Psoas muscle (tissue), 8 donors: ENCODE measurements at regions of chr20 and their contacts with region 1.

Region 1: GRCh38 chr20:45011108-45011526 is 44.8 kb downstream of the STK4 start:
- DNase-seq: no peak
- ATAC-seq: peak in 3 of 4 donors; percentile 64 to 71 (median 68)
- H3K4me3 ChIP-seq: no peak overlapping the region
- H3K27ac ChIP-seq: no peak overlapping the region
- H3K4me1 ChIP-seq: no peaks in the 10 kb centered on the region
- H3K27me3 ChIP-seq: no peaks in the 10 kb centered on the region
- CTCF ChIP-seq: peak; percentile 70

Region 2: DNA sequence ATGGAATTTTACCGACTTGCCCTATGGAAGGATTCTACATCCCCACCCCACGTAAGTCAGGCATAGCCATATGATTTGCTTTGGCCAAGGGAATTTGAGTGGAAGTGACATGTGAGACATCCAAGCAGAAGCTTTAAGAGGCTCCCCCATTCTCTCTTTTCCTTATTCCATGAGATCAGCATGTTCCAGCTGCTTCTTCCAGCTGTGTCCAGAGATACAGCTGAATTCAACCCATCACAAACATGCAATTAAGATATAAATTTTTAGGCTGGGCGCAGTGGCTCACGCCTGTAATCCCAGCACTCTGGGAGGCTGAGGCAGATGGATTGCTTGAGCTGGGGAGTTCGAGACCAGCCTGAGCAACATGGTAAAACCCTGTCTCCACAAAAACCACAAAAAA is 141.6 kb before region 1 on chr20:
- intact Hi-C with region 1: no loop called
- DNase-seq: no peak
- ATAC-seq: no peak
- H3K4me3 ChIP-seq: no peak overlapping the region
- H3K27ac ChIP-seq: no peak overlapping the region
- H3K4me1 ChIP-seq: peaks cover 7% of the 10 kb centered on the region
- H3K27me3 ChIP-seq: no peaks in the 10 kb centered on the region
- CTCF ChIP-seq: no peak

Region 3: DNA sequence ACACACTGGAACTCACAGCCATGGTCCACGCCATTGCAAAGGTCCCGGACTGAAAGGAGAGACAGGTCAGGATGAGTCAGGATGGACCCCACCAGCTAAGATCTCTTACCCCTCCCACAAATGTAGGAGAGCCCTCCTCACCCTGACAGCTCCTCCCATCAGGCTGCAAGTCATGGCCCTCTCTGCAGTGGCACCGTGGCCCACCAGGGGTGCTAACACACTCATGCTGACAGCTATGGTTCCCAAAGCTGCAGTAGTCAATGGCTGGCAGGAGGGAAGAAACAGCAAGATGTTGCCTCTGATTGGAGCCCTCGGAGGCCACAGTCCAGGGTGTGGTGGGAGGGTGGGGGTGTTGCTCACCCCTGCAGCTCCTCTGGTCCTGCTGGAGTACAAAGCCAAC is 289.8 kb after region 1 on chr20:
- intact Hi-C with region 1: loop called in 1 of 2 experiments (anchors 10 kb)
- DNase-seq: no peak
- ATAC-seq: no peak
- H3K4me3 ChIP-seq: no peak overlapping the region
- H3K27ac ChIP-seq: no peak overlapping the region
- H3K4me1 ChIP-seq: no peaks in the 10 kb centered on the region
- H3K27me3 ChIP-seq: peaks cover 0 to 36% (median 0%) of the 10 kb centered on the region in 3 donors
- CTCF ChIP-seq: no peak

Region 4: DNA sequence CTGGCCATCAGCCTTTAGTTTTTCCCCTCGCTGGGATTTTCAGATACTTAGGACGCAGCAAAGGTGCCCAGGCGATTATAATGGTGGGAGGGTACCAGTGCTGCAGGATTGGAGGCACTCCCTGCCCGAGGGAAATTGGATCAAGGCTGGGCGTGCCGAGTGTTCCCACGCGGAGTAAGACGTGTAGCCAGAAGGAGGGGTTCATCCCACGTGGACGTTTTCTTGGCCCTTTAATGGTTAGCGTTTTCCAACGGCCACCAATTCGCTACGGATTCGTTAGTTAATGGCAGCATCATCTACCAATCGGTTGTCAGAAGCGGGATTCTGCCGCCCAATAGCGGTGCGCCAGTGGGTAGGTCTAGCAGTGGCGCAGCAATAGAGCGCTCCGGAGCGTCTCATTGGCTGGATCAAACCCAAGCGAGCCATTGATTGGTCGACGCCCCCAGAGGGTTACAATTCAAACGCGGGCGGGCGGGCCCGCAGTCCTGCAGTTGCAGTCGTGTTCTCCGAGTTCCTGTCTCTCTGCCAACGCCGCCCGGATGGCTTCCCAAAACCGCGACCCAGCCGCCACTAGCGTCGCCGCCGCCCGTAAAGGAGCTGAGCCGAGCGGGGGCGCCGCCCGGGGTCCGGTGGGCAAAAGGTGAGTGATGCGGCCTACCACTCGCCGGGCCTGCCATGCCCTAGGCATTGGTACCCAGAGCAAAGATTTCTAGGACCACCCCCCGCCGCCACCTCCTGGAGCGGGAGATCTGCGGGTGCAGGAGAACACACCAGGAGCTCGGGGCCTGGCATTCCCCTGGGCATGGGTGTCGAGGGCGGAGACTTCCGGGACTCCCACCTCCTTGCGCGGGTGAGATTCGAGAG is 801.3 kb after region 1 on chr20 and contains the start of gene UBE2C:
- intact Hi-C with region 1: no loop called
- DNase-seq: peak; percentile 96 to 98
- ATAC-seq: peak; percentile 85 to 98 (median 96)
- H3K4me3 ChIP-seq: peak within 1 kb of the TSS; percentile 61
- H3K27ac ChIP-seq: peak within 1 kb of the TSS; percentile 59
- H3K4me1 ChIP-seq: peaks cover 15% of the 10 kb centered on the region
- H3K27me3 ChIP-seq: no peaks in the 10 kb centered on the region
- CTCF ChIP-seq: no peak
- total RNA-seq, gene UBE2C: 0.32 to 0.42 (median 0.38) TPM